CD8-positive, alpha-beta T cell (primary cell): ENCODE measurements at regions of chr6 and their contacts with region 1.

Region 1: GRCh38 chr6:33264015-33264414 is 7.7 kb downstream of the VPS52 start:
- DNase-seq: no peak
- ATAC-seq: no peak
- H3K4me3 ChIP-seq: no peak overlapping the region
- H3K4me3 Mint-ChIP-seq: no peak overlapping the region
- H3K27ac ChIP-seq: no peak overlapping the region
- H3K27ac Mint-ChIP-seq: no peak overlapping the region
- H3K4me1 ChIP-seq: no peaks in the 10 kb centered on the region
- H3K4me1 Mint-ChIP-seq: peaks cover 8% of the 10 kb centered on the region
- H3K27me3 ChIP-seq: no peaks in the 10 kb centered on the region
- H3K27me3 Mint-ChIP-seq: no peaks in the 10 kb centered on the region
- CTCF ChIP-seq: no peak

Region 2: GRCh38 chr6:31643818-31644454 is 1620.1 kb before region 1 on chr6:
- CTCF ChIA-PET with region 1: no interaction called
- POLR2A ChIA-PET with region 1: no interaction called
- intact Hi-C with region 1: loop called in 1 of 2 experiments (anchors 10 kb)
- DNase-seq: no peak
- ATAC-seq: no peak
- H3K4me3 ChIP-seq: no peak overlapping the region
- H3K4me3 Mint-ChIP-seq: no peak overlapping the region
- H3K27ac ChIP-seq: no peak overlapping the region
- H3K27ac Mint-ChIP-seq: no peak overlapping the region
- H3K4me1 ChIP-seq: no peaks in the 10 kb centered on the region
- H3K4me1 Mint-ChIP-seq: peaks cover 9% of the 10 kb centered on the region
- H3K27me3 ChIP-seq: no peaks in the 10 kb centered on the region
- H3K27me3 Mint-ChIP-seq: no peaks in the 10 kb centered on the region
- CTCF ChIP-seq: no peak

Region 3: GRCh38 chr6:33235221-33235634 is 28.8 kb before region 1 on chr6:
- CTCF ChIA-PET with region 1: no interaction called
- POLR2A ChIA-PET with region 1: no interaction called
- intact Hi-C with region 1: no loop called
- DNase-seq: no peak
- ATAC-seq: no peak
- H3K4me3 ChIP-seq: no peak overlapping the region
- H3K4me3 Mint-ChIP-seq: no peak overlapping the region
- H3K27ac ChIP-seq: no peak overlapping the region
- H3K27ac Mint-ChIP-seq: no peak overlapping the region
- H3K4me1 ChIP-seq: no peaks in the 10 kb centered on the region
- H3K4me1 Mint-ChIP-seq: no peaks in the 10 kb centered on the region
- H3K27me3 ChIP-seq: peaks cover 0 to 5% of the 10 kb centered on the region in 2 experiments
- H3K27me3 Mint-ChIP-seq: peaks cover 15% of the 10 kb centered on the region
- CTCF ChIP-seq: no peak